CD4-positive, alpha-beta memory T cell (primary cell): ENCODE measurements at regions of chr4 and their contacts with region 1.

Region 1: DNA sequence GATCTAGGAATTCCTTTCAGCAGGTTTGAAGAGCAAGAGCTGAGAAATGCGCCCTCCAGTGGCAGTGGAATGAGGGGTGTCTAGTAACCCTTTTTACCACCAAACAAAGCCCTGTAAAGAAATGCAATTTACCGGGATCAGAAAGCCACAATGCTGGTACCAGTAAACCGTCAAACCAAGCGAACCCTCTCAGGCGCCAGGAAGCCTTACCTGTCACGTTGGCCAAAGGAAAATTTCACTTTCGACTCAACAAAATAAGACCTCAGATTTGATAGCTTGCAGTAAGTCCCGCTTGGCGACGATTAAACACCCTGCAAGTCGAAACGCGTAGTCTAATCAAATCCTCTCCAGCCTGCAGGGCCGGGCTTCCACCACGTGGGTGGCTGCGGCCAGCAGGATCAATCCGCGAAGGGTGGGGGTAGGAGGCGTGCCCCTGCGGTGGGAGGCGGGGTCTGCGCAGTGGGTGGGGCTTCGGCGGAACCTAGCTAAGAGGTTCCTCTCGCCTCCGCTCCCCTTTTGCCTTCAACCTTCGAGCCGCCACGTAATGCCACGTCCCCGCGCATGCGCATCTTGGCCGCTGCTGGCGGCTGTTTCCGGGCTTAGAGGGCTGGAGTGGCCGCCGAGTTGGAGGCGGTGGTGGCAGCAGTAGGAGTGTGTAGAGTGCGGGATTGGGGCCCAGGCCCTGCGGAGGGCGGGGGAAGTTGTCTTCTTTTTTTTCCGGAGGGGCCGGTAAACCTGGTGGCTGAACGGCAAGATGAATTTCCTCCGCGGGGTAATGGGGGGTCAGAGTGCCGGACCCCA is at the start of gene USO1:
- DNase-seq: peak; percentile 99
- H3K4me3 ChIP-seq: peak within 1 kb of the TSS; percentile 91 to 93
- H3K4me3 Mint-ChIP-seq: peak within 1 kb of the TSS; percentile 97 to 100 (median 100)
- H3K27ac ChIP-seq: peak within 1 kb of the TSS; percentile 86
- H3K27ac Mint-ChIP-seq: peak within 1 kb of the TSS; percentile 98 to 100 (median 99)
- H3K4me1 ChIP-seq: peaks cover 52% of the 10 kb centered on the region
- H3K4me1 Mint-ChIP-seq: peaks cover 33 to 64% (median 49%) of the 10 kb centered on the region in 4 donors
- H3K27me3 ChIP-seq: no peaks in the 10 kb centered on the region
- H3K27me3 Mint-ChIP-seq: no peaks in the 10 kb centered on the region
- total RNA-seq, gene USO1: 48.6 to 49.4 TPM

Region 2: DNA sequence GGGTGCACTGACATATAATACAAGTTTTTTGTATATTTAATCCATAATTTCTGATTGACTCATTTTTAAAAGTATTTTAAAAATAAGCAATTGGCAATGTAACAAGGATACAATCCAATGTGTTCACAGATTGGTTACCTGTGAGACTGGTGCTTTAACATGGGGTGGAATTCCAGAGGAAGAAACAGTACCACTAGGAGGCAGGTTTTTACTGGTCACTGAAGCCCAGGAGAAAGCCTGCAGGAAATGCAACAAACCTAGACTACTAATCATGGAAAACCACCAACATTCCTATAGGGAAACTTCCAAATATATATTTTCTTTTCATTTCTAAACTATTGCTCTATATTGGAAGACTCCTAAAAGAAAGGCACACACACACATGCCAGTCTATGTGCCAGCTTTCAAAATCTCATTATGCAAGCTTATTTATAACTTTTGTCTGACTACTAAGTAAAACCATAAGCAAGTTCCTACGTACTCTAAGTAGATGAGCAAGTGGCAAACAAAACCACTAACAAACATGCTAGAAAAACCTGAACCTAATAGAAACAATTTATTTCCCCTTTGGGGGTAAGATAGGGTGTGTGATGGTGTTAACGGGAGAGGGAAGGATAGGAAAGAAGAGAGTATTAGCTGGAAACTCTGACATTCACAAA is 70.3 kb before region 1 on chr4:
- CTCF ChIA-PET with region 1: interaction called, 22 read pairs
- POLR2A ChIA-PET with region 1: interaction called, 19 read pairs
- intact Hi-C with region 1: loop called (anchors 1 kb)
- DNase-seq: no peak
- H3K4me3 ChIP-seq: no peak overlapping the region
- H3K4me3 Mint-ChIP-seq: no peak overlapping the region
- H3K27ac ChIP-seq: peak overlapping the region; percentile 18
- H3K27ac Mint-ChIP-seq: peak overlapping the region in 5 of 7 donors; percentile 61 to 93 (median 81)
- H3K4me1 ChIP-seq: peaks cover 46% of the 10 kb centered on the region
- H3K4me1 Mint-ChIP-seq: peaks cover 28 to 55% (median 35%) of the 10 kb centered on the region in 4 donors
- H3K27me3 ChIP-seq: no peaks in the 10 kb centered on the region
- H3K27me3 Mint-ChIP-seq: no peaks in the 10 kb centered on the region

Region 3: DNA sequence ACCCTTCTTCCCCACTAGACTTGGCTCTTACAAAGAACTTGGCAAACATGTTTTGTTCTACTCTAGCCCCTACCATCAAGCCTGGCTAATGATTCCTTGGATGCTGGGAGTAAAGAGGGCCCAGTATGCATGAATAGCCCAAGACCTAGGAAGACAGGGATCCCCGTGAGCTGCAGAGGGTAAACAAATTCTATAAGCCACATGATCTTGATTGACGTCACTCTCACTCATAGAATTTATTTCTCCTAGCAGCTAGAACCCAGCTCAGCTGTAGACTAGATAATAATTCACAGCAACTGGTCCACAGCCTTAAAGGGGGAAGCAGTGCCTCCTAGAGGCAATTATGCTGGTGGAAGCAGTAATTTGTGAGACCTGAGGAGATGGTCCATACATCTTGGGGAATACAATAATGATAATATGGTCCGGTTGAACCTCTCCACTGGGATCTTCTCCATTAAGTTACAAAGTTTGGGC is 16.0 kb before region 1 on chr4:
- CTCF ChIA-PET with region 1: interaction called, 37 read pairs
- POLR2A ChIA-PET with region 1: interaction called, 10 read pairs
- intact Hi-C with region 1: loop called (anchors 2 kb)
- DNase-seq: peak; percentile 47 to 63 (median 49)
- H3K4me3 ChIP-seq: no peak overlapping the region
- H3K4me3 Mint-ChIP-seq: no peak overlapping the region
- H3K27ac ChIP-seq: no peak overlapping the region
- H3K27ac Mint-ChIP-seq: peak overlapping the region in 5 of 7 donors; percentile 43 to 69 (median 50)
- H3K4me1 ChIP-seq: no peaks in the 10 kb centered on the region
- H3K4me1 Mint-ChIP-seq: peaks cover 0 to 5% (median under 1%) of the 10 kb centered on the region in 4 donors
- H3K27me3 ChIP-seq: no peaks in the 10 kb centered on the region
- H3K27me3 Mint-ChIP-seq: no peaks in the 10 kb centered on the region

Region 4: DNA sequence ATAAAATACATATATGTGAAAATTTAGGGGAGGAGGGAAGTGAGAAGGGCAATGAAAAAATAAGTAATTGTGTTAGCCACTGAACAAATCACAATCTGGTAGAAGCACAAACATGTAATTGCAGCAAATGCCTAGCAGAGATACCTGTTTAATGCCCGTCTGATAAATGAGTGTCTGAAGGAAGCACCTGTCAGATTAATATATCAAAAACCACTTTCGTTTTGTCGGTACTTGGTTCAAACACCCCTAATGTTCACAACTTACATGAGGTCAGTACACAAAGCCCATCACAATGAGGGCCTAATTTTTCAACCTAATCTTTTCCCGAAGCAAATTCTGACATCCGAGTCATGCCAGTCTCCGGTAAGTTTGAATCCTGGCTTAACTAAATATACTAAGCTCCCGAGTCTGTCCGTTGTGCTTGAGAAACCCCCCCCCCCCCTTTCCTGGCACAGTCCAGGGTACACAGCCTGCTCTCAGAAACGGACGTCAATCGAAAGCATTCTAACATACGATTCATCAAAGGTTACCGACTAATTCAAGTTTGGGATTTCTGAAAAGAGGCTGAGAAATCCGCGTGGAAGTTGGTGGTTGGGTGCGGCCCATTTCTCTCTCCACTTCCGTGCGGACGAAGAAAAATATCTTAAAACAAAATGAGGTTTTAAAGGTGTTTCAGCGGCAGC is 265.7 kb after region 1 on chr4:
- CTCF ChIA-PET with region 1: no interaction called
- POLR2A ChIA-PET with region 1: no interaction called
- intact Hi-C with region 1: loop called (anchors 5 kb)
- DNase-seq: peak in 4 of 5 donors; percentile 3 to 14 (median 8)
- H3K4me3 ChIP-seq: peak overlapping the region; percentile 84 to 93
- H3K4me3 Mint-ChIP-seq: peak overlapping the region; percentile 95 to 98 (median 96)
- H3K27ac ChIP-seq: peak overlapping the region; percentile 70
- H3K27ac Mint-ChIP-seq: peak overlapping the region; percentile 92 to 97 (median 95)
- H3K4me1 ChIP-seq: peaks cover 53% of the 10 kb centered on the region
- H3K4me1 Mint-ChIP-seq: peaks cover 0 to 34% (median 20%) of the 10 kb centered on the region in 4 donors
- H3K27me3 ChIP-seq: no peaks in the 10 kb centered on the region
- H3K27me3 Mint-ChIP-seq: peaks cover 0 to 5% of the 10 kb centered on the region in 2 donors

Region 5: GRCh38 chr4:76002176-76002575 is 277.9 kb after region 1 on chr4:
- CTCF ChIA-PET with region 1: no interaction called
- POLR2A ChIA-PET with region 1: no interaction called
- intact Hi-C with region 1: no loop called
- DNase-seq: no peak
- H3K4me3 ChIP-seq: no peak overlapping the region
- H3K4me3 Mint-ChIP-seq: no peak overlapping the region
- H3K27ac ChIP-seq: no peak overlapping the region
- H3K27ac Mint-ChIP-seq: no peak overlapping the region
- H3K4me1 ChIP-seq: no peaks in the 10 kb centered on the region
- H3K4me1 Mint-ChIP-seq: no peaks in the 10 kb centered on the region
- H3K27me3 ChIP-seq: no peaks in the 10 kb centered on the region
- H3K27me3 Mint-ChIP-seq: peaks cover 3 to 15% of the 10 kb centered on the region in 2 donors

Region 6: GRCh38 chr4:76579610-76580375 is 855.5 kb after region 1 on chr4:
- CTCF ChIA-PET with region 1: no interaction called
- POLR2A ChIA-PET with region 1: no interaction called
- intact Hi-C with region 1: no loop called
- DNase-seq: no peak
- H3K4me3 ChIP-seq: no peak overlapping the region
- H3K4me3 Mint-ChIP-seq: no peak overlapping the region
- H3K27ac ChIP-seq: no peak overlapping the region
- H3K27ac Mint-ChIP-seq: no peak overlapping the region
- H3K4me1 ChIP-seq: no peaks in the 10 kb centered on the region
- H3K4me1 Mint-ChIP-seq: no peaks in the 10 kb centered on the region
- H3K27me3 ChIP-seq: no peaks in the 10 kb centered on the region
- H3K27me3 Mint-ChIP-seq: peaks cover 33 to 45% of the 10 kb centered on the region in 2 donors